ENCODE measurements at regions of chr22 and their contacts with region 1.

Region 1: DNA sequence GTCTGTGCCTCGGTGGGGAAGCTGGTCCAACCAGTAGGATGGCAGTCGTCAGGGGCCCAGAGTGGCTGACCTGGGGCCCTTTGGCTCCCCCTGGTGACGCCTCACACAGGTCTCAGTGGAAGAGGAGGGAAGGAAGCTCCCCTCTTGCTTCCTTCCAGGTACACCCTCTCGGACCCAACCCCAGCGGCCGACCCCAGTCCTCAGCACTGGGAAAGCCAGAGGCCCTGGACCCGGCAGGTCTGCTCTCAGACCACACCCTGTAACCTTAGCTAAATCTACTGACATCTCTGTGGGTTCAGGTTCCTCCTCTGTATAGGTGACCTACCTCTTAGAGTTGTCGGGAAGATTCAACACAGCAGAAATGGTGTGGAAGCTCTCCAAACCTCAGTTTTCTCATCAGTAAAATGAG is 3.4 kb upstream of the SCUBE1 start:
- DNase-seq: peak; percentile 70
- H3K4me3 Mint-ChIP-seq: no peak overlapping the region
- H3K27ac Mint-ChIP-seq: no peak overlapping the region
- H3K4me1 Mint-ChIP-seq: peaks cover 17% of the 10 kb centered on the region
- H3K27me3 Mint-ChIP-seq: peaks cover 31% of the 10 kb centered on the region

Region 2: GRCh38 chr22:43230971-43231723 is 115.4 kb before region 1 on chr22:
- CTCF ChIA-PET with region 1: interaction called, 30 read pairs
- POLR2A ChIA-PET with region 1: no interaction called
- DNase-seq: peak; percentile 73
- H3K4me3 Mint-ChIP-seq: no peak overlapping the region
- H3K27ac Mint-ChIP-seq: no peak overlapping the region
- H3K4me1 Mint-ChIP-seq: peaks cover 5% of the 10 kb centered on the region
- H3K27me3 Mint-ChIP-seq: no peaks in the 10 kb centered on the region

Region 3: GRCh38 chr22:43263645-43264514 is 82.6 kb before region 1 on chr22:
- CTCF ChIA-PET with region 1: interaction called, 22 read pairs
- POLR2A ChIA-PET with region 1: interaction called, 3 read pairs
- DNase-seq: peak; percentile 87
- H3K4me3 Mint-ChIP-seq: peak overlapping the region; percentile 65
- H3K27ac Mint-ChIP-seq: peak overlapping the region; percentile 89
- H3K4me1 Mint-ChIP-seq: peaks cover 30% of the 10 kb centered on the region
- H3K27me3 Mint-ChIP-seq: peaks cover under 1% of the 10 kb centered on the region

Region 4: GRCh38 chr22:43273902-43274484 is 72.5 kb before region 1 on chr22:
- CTCF ChIA-PET with region 1: interaction called, 30 read pairs
- POLR2A ChIA-PET with region 1: no interaction called
- DNase-seq: peak; percentile 49
- H3K4me3 Mint-ChIP-seq: no peak overlapping the region
- H3K27ac Mint-ChIP-seq: no peak overlapping the region
- H3K4me1 Mint-ChIP-seq: peaks cover 9% of the 10 kb centered on the region
- H3K27me3 Mint-ChIP-seq: no peaks in the 10 kb centered on the region

Region 5: DNA sequence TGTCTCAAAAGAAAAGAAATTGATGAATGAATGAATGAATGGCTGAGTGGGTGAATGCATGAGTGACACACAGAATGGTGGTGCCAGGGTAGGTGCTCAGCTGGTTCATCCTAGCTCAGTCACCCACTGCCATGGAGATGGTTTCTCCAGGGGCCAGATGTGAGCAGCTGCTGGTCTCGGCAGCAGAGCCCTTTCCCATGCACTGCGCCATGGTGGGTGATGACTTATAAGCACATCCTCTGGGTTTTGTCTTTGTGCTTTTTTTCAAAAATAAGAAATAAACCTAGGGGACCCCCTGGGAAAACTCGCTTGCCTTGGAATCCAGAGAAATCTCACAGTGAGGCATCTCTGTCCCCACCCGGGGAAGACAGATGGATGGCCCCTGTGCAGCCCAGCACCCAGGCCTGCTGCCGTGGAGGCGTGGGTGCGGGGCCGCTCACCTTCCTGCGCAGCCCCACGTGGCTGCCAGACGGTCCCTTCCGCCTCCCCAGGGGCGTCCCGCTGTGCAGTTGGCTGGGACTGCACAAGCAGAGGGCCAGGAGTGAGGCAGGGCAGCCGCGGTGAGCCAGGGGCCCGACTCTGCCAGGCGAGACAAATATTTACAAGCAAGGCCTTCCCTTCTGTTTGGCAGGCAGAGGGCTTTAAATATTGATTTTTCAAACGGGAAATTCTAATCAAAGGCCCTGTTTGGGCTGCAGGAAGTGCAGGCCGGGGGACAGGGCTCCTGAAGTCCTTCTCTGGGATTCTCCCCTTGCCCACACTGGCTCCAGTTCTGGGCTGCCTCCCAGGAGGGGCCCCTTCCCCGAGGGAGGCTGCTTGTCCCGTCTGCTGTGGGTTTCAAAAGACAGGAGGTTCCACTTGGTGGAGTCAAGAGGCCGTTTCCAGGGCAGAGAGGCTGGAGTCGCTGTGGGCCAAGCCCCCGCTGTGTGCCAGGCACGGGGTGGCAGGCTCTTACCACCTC is 89.6 kb after region 1 on chr22:
- CTCF ChIA-PET with region 1: no interaction called
- POLR2A ChIA-PET with region 1: no interaction called
- DNase-seq: no peak
- H3K4me3 Mint-ChIP-seq: no peak overlapping the region
- H3K27ac Mint-ChIP-seq: no peak overlapping the region
- H3K4me1 Mint-ChIP-seq: no peaks in the 10 kb centered on the region
- H3K27me3 Mint-ChIP-seq: peaks cover 8% of the 10 kb centered on the region